ENCODE measurements at regions of chr18 and their contacts with region 1.

Region 1: DNA sequence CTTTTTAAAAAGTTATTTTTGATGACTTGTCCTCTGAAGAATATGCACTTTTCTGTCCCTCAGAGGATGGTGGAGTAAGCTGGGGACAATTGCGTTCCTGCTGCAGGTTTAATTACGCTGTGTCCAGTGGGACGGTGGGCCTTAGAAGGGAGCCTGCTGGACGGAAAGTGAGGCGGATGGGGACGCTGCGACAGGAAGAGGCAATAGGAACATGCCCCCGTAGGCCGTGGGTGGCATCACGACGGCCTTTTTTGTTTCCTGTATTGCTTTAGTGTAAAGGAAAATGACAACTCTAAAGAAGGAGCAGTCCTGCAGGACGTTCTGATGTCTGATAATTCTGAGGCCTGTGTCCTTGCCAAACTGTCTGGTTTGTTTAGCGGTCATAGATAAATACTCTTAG is 121.6 kb downstream of the NFATC1 start:
- DNase-seq: no peak
- H3K4me3 Mint-ChIP-seq: peak overlapping the region; percentile 70
- H3K27ac Mint-ChIP-seq: peak overlapping the region; percentile 89
- H3K4me1 Mint-ChIP-seq: peaks cover 57% of the 10 kb centered on the region
- H3K27me3 Mint-ChIP-seq: peaks cover 2% of the 10 kb centered on the region

Region 2: GRCh38 chr18:79507076-79507545 is 10.2 kb before region 1 on chr18:
- intact Hi-C with region 1: loop called (anchors 1 kb)
- DNase-seq: no peak
- H3K4me3 Mint-ChIP-seq: peak overlapping the region; percentile 54
- H3K27ac Mint-ChIP-seq: peak overlapping the region; percentile 75
- H3K4me1 Mint-ChIP-seq: peaks cover 53% of the 10 kb centered on the region
- H3K27me3 Mint-ChIP-seq: no peaks in the 10 kb centered on the region